Mammary epithelial cell (primary cell): ENCODE measurements at regions of chr1 and their contacts with region 1.

Region 1: GRCh38 chr1:17475729-17476128 is 36.3 kb upstream of the RCC2 start:
- DNase-seq: peak; percentile 92
- H3K4me3 ChIP-seq: no peak overlapping the region
- H3K27ac ChIP-seq: no peak overlapping the region
- H3K4me1 ChIP-seq: peaks cover 8% of the 10 kb centered on the region
- H3K27me3 ChIP-seq: no peaks in the 10 kb centered on the region
- CTCF ChIP-seq: no peak

Region 2: DNA sequence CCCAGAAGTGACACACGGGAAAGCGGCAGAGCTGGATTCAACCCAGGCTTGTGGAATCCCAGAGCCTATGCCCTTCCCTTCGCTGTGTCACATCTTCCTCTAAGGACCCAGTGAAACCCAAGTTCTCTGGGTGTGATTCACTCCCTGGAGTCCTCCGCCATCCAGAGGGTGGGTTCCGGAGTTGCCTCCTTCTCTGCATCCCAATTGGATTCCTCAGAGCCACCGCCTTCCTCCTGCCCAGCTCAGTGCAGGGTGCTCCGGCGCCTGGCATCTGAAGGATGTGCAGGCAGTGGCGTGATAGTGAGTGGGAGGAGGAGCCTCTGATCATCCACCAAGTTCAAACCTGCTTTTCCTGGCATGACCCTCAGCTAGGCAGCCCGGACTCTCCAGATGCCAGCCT is 15.5 kb before region 1 on chr1:
- CTCF ChIA-PET with region 1: no interaction called
- dilution Hi-C with region 1: no loop called
- in situ Hi-C with region 1: no loop called
- intact Hi-C with region 1: loop called (anchors 1 kb)
- DNase-seq: peak; percentile 98
- H3K4me3 ChIP-seq: peak overlapping the region in 2 of 3 experiments; percentile 28
- H3K27ac ChIP-seq: peak overlapping the region; percentile 86
- H3K4me1 ChIP-seq: peaks cover 5% of the 10 kb centered on the region
- H3K27me3 ChIP-seq: no peaks in the 10 kb centered on the region
- CTCF ChIP-seq: peak in 1 of 2 donors; percentile 2